Heart left ventricle (tissue), 16 donors: ENCODE measurements at regions of chr4 and their contacts with region 1.

Region 1: DNA sequence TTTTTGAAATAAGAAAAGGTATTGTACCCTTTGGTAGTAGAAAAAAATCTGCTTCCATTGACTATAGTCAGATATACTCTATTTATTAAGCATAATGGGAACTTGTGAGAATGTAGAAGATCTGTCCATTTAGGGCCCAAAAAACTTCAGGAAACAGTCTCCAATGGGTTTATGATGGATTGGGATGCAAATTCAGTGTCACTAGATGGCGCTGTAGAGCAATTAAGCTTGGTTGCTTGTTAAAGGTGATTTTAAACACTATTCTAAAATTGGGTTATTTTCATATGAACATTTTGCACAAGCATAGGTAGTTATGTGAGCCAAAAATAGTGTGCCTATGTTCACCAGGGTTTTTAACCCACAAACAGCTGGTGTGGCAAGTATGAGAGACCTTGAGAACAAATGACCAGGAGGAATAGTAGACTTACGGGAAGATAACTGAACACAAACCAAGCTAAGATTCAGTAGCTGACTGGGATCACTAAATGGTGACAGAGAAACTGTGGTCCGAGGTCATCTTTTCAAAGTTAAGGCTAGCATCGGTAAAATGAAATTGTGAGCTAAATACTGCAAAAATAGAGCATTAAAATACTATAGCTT is 80.3 kb upstream of the LSM6 start:
- DNase-seq: no peak
- ATAC-seq: no peak
- H3K4me3 ChIP-seq: no peak overlapping the region
- H3K27ac ChIP-seq: no peak overlapping the region
- H3K4me1 ChIP-seq: no peaks in the 10 kb centered on the region
- H3K27me3 ChIP-seq: no peaks in the 10 kb centered on the region
- CTCF ChIP-seq: peak; percentile 54 to 73 (median 66)
- POLR2A ChIP-seq: no peak

Region 2: DNA sequence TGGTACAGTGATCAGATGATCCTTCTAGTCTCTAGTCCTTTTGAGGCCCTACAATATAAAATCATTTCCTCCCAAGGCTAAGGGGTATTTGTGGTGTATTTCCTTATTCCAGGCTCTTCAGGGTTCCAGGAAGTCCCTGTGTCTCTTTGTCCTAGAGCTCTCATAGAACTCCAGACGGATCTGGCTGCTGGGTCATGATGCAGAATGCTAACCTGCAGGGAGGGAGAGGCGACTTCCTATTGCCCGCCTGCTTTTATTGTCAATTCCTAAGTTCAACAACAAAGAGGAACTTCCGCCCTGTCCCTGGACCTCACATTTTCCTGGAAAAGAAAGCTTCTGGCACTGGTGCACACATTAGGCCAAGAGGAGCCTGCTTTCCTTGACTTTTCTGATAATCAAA is 110.6 kb before region 1 on chr4:
- intact Hi-C with region 1: no loop called
- DNase-seq: peak in 3 of 5 donors; percentile 13 to 42 (median 26)
- ATAC-seq: peak in 3 of 4 donors; percentile 36 to 82 (median 63)
- H3K4me3 ChIP-seq: no peak overlapping the region
- H3K27ac ChIP-seq: peak overlapping the region in 1 of 12 donors; percentile 30
- H3K4me1 ChIP-seq: peaks cover 0 to 6% (median 0%) of the 10 kb centered on the region in 12 donors
- H3K27me3 ChIP-seq: no peaks in the 10 kb centered on the region
- CTCF ChIP-seq: no peak
- POLR2A ChIP-seq: no peak

Region 3: GRCh38 chr4:146235654-146236177 is 140.5 kb after region 1 on chr4:
- intact Hi-C with region 1: loop called in 1 of 10 experiments (anchors 10 kb)
- DNase-seq: peak in 2 of 5 donors; percentile 43 to 57
- ATAC-seq: peak; percentile 50 to 82 (median 69)
- H3K4me3 ChIP-seq: no peak overlapping the region
- H3K27ac ChIP-seq: peak overlapping the region in 7 of 12 donors; percentile 5 to 76 (median 42)
- H3K4me1 ChIP-seq: peaks cover 0 to 22% (median 12%) of the 10 kb centered on the region in 12 donors
- H3K27me3 ChIP-seq: no peaks in the 10 kb centered on the region
- CTCF ChIP-seq: no peak
- POLR2A ChIP-seq: no peak

Region 4: DNA sequence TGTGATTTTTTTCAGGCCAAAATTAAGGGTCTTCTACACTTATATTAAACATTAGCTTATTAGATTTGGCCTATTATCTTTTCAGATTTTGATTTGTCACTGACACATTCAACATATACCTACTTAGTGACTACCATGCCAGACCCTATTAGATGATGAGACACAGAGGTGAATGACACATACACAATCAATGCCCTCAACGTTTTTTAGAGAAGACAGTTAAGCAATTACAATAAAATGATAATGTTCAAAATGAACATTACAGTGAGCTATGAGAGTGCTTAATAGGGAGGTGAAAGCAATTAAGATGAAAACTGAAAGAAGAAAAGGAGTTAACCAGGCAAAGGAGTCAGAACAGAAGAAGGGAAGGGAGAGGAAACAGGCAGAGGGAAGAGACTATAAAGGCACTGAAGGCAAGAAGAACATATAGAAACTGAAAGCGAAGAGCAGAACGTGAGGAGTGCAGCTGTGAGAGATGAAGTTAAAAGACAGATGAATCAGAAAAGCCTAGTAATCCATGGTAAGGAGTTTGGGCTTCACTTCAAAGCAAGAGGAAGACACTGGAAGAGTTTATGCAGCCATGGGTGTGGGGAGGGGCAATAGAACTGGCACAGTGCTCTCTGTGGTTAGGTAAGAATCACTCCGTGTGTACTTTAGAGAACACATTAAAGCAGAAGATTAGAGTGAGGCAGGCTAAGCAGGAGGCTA is 238.2 kb after region 1 on chr4:
- intact Hi-C with region 1: loop called in 3 of 10 experiments (anchors 10 kb)
- DNase-seq: no peak
- ATAC-seq: no peak
- H3K4me3 ChIP-seq: no peak overlapping the region
- H3K27ac ChIP-seq: no peak overlapping the region
- H3K4me1 ChIP-seq: peaks cover 0 to 23% (median 1%) of the 10 kb centered on the region in 12 donors
- H3K27me3 ChIP-seq: no peaks in the 10 kb centered on the region
- CTCF ChIP-seq: no peak
- POLR2A ChIP-seq: no peak

Region 5: DNA sequence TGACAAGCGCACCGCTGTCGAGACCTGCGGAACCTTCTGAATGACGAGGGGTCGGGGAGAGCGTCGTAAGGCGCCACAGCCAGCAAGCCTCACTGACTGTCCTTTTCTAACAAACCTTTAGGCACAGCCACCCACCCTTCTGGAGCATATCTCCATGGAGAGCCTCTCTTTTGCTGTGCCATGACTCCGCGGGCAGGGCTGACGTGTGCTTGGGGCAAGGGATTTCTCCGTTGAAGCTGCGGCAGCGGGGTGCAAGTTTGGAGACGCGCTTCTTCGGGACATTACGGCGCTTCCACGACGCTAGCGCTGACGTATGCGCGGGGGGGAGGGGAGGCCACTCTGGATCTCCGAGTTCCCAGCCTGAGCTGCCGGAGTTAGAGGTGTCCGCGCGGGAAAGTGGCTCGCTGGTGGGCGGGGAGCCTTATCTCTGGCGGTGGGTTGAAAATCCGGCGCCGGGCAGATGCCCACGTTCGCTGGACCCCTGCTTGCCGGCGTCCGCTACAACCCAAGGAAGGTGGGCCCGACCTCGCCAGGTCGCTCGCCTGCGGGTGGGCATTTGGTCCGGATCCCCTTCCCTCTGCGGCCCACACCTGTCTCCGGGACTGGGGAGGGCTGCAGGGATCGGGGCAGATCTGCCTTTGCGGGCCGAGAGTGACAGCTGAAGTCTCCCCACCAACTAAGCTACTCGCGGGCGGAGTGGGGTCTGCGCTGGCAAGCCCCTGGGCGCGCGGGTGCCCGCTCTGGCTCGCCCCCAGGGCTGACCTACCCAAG is 427.1 kb after region 1 on chr4:
- intact Hi-C with region 1: loop called in 1 of 10 experiments (anchors 10 kb)
- DNase-seq: peak; percentile 90 to 94 (median 92)
- ATAC-seq: peak; percentile 96 to 99 (median 99)
- H3K4me3 ChIP-seq: peak overlapping the region; percentile 66 to 99 (median 96)
- H3K27ac ChIP-seq: peak overlapping the region; percentile 19 to 90 (median 80)
- H3K4me1 ChIP-seq: peaks cover 0 to 24% (median 18%) of the 10 kb centered on the region in 12 donors
- H3K27me3 ChIP-seq: no peaks in the 10 kb centered on the region
- CTCF ChIP-seq: no peak
- POLR2A ChIP-seq: peak in 1 of 2 donors; percentile 72

Region 6: GRCh38 chr4:146916479-146917076 is 821.4 kb after region 1 on chr4:
- intact Hi-C with region 1: loop called in 3 of 10 experiments (anchors 5 to 10 kb)
- DNase-seq: no peak
- ATAC-seq: no peak
- H3K4me3 ChIP-seq: no peak overlapping the region
- H3K27ac ChIP-seq: no peak overlapping the region
- H3K4me1 ChIP-seq: no peaks in the 10 kb centered on the region
- H3K27me3 ChIP-seq: peaks cover 0 to 47% (median 5%) of the 10 kb centered on the region in 9 donors
- CTCF ChIP-seq: peak; percentile 43 to 85 (median 70)
- POLR2A ChIP-seq: no peak

Region 7: DNA sequence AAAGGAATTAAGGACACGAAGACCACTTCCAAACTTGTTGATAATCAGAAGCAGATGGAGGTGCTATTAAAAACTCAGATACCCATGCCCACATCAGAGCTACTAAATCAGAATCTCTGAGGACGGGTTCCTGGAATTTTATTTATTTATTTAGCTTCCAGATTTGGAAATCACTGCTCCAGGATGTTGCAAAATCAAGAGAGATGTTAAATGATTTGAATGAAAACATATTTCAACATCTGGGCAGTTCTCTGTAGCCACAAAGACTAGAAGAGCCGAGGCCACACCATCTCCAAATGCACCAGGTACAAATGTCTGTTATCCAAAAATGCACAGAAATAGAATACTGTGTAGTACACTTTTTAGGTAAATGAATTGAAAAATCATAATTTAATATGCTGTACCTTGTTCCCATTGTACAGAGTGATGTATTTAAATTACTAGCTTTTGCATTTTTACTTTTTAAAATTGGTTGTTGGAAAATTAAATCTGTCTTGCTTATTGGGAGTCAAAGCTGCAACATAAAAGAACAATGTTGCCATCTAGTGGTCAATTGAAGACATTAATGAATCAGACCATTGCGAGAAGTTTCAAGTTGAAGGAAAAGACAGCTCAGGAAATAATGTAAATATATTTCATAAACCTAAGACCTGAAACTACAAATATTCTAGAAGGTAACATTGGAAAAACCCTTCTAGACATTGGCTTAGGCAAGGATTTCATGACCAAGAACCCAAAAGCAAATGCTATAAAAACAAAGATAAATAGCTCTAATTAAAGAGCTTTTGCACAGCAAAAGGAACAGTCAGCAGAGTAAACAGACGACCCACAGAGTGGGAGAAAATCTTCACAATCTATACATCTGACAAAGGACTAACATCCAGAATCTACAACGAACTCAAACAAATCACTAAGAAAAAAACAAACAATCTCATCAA is 1001.7 kb after region 1 on chr4:
- intact Hi-C with region 1: loop called in 2 of 10 experiments (anchors 5 to 10 kb)
- DNase-seq: no peak
- ATAC-seq: peak in 1 of 4 donors; percentile 49
- H3K4me3 ChIP-seq: no peak overlapping the region
- H3K27ac ChIP-seq: no peak overlapping the region
- H3K4me1 ChIP-seq: no peaks in the 10 kb centered on the region
- H3K27me3 ChIP-seq: no peaks in the 10 kb centered on the region
- CTCF ChIP-seq: peak; percentile 49 to 79 (median 68)
- POLR2A ChIP-seq: no peak

Region 8: DNA sequence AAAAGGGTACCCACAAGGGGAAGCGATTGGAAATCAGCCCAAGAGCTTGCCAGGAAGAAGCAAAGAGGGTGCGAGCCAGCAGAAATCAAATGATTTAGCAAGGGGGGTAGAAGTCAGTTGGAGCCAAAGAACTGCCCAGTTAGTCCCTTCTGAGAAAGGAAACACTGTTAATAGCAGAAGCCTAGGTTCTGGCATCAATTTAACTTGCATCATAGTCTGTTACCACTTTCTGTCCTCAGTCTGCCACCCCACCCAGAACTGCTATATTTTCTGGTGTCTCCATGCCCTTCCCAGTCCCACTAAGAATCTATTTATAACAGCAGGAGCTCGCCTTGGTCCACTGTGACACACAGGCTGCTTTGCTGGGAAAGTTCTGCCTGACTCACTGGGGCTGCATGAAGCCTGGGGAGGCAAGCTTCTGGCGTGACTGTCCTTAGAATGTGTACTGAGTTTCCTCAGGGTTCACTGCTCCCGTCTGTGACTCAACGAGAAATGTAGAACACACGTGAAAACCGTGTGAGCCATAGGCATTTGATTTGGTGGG is 1008.3 kb after region 1 on chr4:
- intact Hi-C with region 1: loop called in 2 of 10 experiments (anchors 5 to 10 kb)
- DNase-seq: peak in 4 of 5 donors; percentile 37 to 81 (median 53)
- ATAC-seq: peak; percentile 82 to 98 (median 93)
- H3K4me3 ChIP-seq: no peak overlapping the region
- H3K27ac ChIP-seq: peak overlapping the region in 10 of 12 donors; percentile 3 to 68 (median 48)
- H3K4me1 ChIP-seq: peaks cover 0 to 23% (median 10%) of the 10 kb centered on the region in 12 donors
- H3K27me3 ChIP-seq: no peaks in the 10 kb centered on the region
- CTCF ChIP-seq: no peak
- POLR2A ChIP-seq: no peak